ENCODE measurements at regions of chr1 and their contacts with region 1.

Region 1: DNA sequence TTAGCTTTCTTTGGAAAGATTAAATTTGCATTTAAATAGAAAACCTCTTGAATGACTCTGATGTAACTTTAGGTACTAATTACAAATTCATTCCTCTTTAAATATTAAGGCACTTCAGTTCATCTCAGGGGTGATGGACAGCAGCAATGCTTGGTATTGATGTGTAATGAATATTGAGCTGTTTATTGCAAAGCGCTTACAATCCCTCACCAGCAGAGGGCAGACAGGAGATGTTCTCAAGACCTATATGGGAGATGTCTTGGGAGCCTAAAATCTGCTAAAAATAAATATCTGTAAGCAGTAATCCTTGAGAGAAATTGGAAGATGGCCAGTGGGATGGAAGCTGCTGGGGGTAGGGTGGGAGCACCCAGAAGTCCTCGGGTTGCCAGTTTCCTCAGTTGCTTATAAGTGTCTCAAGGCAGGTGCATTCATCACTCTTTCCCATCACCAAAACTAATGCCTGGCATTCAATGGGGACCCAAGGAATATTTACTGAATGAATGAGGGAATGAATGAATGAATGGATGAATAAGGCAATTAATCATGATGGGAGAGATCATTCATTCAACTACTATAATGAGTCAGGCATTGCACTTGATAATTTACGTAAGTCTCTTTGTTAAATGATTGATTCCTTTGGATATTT is 2.3 kb downstream of the KLHDC8A start:
- DNase-seq: peak; percentile 82
- H3K4me3 Mint-ChIP-seq: no peak overlapping the region
- H3K27ac Mint-ChIP-seq: no peak overlapping the region
- H3K4me1 Mint-ChIP-seq: no peaks in the 10 kb centered on the region
- H3K27me3 Mint-ChIP-seq: no peaks in the 10 kb centered on the region

Region 2: DNA sequence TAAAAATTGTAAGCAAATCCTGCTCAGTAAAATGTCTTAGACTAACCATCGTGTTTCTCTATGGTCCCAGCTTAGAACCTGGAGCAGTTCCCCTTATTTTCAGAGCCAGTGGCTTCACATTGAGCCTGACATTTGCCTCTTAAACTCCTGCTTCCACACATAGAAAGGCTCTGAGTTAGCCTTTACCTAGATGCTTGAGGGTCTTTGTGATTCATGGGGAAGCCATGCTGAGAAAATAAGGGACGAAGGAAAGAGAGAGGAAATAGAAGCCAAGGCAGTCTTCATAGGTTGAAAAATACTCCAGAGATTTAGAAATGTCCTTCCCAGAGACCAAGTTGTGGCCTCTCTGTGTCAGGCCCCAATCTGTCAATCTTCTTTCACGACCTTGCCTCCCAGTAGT is 216.5 kb before region 1 on chr1:
- CTCF ChIA-PET with region 1: no interaction called
- intact Hi-C with region 1: no loop called
- DNase-seq: no peak
- H3K4me3 Mint-ChIP-seq: no peak overlapping the region
- H3K27ac Mint-ChIP-seq: no peak overlapping the region
- H3K4me1 Mint-ChIP-seq: peaks cover 7% of the 10 kb centered on the region
- H3K27me3 Mint-ChIP-seq: no peaks in the 10 kb centered on the region

Region 3: DNA sequence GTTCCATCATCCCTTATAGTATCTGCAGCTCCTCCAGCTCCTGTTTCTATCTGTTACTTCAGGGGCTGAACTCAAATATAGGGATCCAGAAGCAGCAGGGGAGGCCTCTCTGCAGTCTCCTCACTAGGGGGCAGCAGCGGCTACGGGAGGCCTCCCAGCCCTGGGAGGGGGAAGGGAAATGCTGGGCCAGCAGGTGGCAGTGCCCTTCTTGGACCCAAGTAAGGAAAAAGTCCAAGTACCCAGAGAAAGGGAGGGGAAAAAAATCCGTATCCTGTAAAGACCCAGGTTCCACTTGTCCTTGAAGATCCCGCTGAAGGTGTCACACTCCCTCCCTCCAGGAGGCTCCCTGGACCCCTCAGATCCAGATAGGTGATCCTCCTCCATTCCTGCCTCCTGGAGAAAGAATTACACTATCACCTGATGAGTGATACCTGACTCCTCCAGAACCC is 18.7 kb before region 1 on chr1:
- CTCF ChIA-PET with region 1: interaction called, 48 read pairs
- intact Hi-C with region 1: loop called (anchors 1 kb)
- DNase-seq: peak; percentile 92
- H3K4me3 Mint-ChIP-seq: no peak overlapping the region
- H3K27ac Mint-ChIP-seq: no peak overlapping the region
- H3K4me1 Mint-ChIP-seq: no peaks in the 10 kb centered on the region
- H3K27me3 Mint-ChIP-seq: no peaks in the 10 kb centered on the region

Region 4: GRCh38 chr1:205365945-205366463 is 11.6 kb after region 1 on chr1:
- CTCF ChIA-PET with region 1: interaction called, 20 read pairs
- intact Hi-C with region 1: no loop called
- DNase-seq: no peak
- H3K4me3 Mint-ChIP-seq: no peak overlapping the region
- H3K27ac Mint-ChIP-seq: no peak overlapping the region
- H3K4me1 Mint-ChIP-seq: no peaks in the 10 kb centered on the region
- H3K27me3 Mint-ChIP-seq: no peaks in the 10 kb centered on the region

Region 5: GRCh38 chr1:205396967-205397616 is 42.7 kb after region 1 on chr1:
- CTCF ChIA-PET with region 1: interaction called, 22 read pairs
- intact Hi-C with region 1: loop called (anchors 1 kb)
- DNase-seq: peak; percentile 43
- H3K4me3 Mint-ChIP-seq: no peak overlapping the region
- H3K27ac Mint-ChIP-seq: no peak overlapping the region
- H3K4me1 Mint-ChIP-seq: no peaks in the 10 kb centered on the region
- H3K27me3 Mint-ChIP-seq: peaks cover 10% of the 10 kb centered on the region

Region 6: GRCh38 chr1:205766038-205766437 is 411.7 kb after region 1 on chr1:
- CTCF ChIA-PET with region 1: no interaction called
- intact Hi-C with region 1: no loop called
- DNase-seq: no peak
- H3K4me3 Mint-ChIP-seq: no peak overlapping the region
- H3K27ac Mint-ChIP-seq: peak overlapping the region; percentile 26
- H3K4me1 Mint-ChIP-seq: peaks cover 40% of the 10 kb centered on the region
- H3K27me3 Mint-ChIP-seq: no peaks in the 10 kb centered on the region